CD8-positive, alpha-beta memory T cell (primary cell): ENCODE measurements at regions of chr18 and their contacts with region 1.

Region 1: GRCh38 chr18:830315-830901 is 18.4 kb upstream of the YES1 start:
- DNase-seq: peak in 3 of 5 donors; percentile 5 to 87 (median 64)
- H3K4me3 ChIP-seq: peak overlapping the region; percentile 18
- H3K4me3 Mint-ChIP-seq: peak overlapping the region; percentile 0 to 67 (median 52)
- H3K27ac ChIP-seq: peak overlapping the region; percentile 0
- H3K27ac Mint-ChIP-seq: peak overlapping the region; percentile 7 to 84 (median 56)
- H3K4me1 ChIP-seq: peaks cover 24% of the 10 kb centered on the region
- H3K4me1 Mint-ChIP-seq: peaks cover 19 to 21% (median 20%) of the 10 kb centered on the region in 3 donors
- H3K27me3 ChIP-seq: no peaks in the 10 kb centered on the region
- H3K27me3 Mint-ChIP-seq: no peaks in the 10 kb centered on the region

Region 2: DNA sequence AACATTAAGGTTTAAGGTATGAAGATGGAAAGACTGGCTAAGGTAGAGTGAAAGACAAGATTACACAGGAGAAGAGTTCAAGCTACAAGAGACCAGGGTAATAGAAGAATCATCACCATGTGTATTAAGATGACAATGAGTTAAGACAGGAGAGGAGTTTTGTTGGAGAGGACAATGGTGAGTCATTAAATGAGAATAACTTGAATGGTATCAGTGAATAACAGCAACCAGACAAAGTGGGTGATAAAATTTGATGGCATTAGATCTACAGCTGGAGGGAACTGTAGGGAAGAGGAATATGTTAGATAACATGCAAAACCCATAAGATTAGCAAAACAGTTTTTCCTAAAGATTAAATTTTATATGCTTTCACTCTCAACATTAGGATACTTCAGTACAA is 99.2 kb before region 1 on chr18:
- CTCF ChIA-PET with region 1: interaction called, 14 read pairs
- POLR2A ChIA-PET with region 1: no interaction called
- DNase-seq: no peak
- H3K4me3 ChIP-seq: no peak overlapping the region
- H3K4me3 Mint-ChIP-seq: no peak overlapping the region
- H3K27ac ChIP-seq: no peak overlapping the region
- H3K27ac Mint-ChIP-seq: peak overlapping the region in 2 of 8 donors; percentile 5 to 55
- H3K4me1 ChIP-seq: no peaks in the 10 kb centered on the region
- H3K4me1 Mint-ChIP-seq: no peaks in the 10 kb centered on the region
- H3K27me3 ChIP-seq: no peaks in the 10 kb centered on the region
- H3K27me3 Mint-ChIP-seq: no peaks in the 10 kb centered on the region

Region 3: GRCh38 chr18:765764-766549 is 64.5 kb before region 1 on chr18:
- CTCF ChIA-PET with region 1: interaction called, 11 read pairs
- POLR2A ChIA-PET with region 1: no interaction called
- DNase-seq: no peak
- H3K4me3 ChIP-seq: no peak overlapping the region
- H3K4me3 Mint-ChIP-seq: no peak overlapping the region
- H3K27ac ChIP-seq: no peak overlapping the region
- H3K27ac Mint-ChIP-seq: no peak overlapping the region
- H3K4me1 ChIP-seq: no peaks in the 10 kb centered on the region
- H3K4me1 Mint-ChIP-seq: peaks cover 22 to 30% (median 24%) of the 10 kb centered on the region in 3 donors
- H3K27me3 ChIP-seq: no peaks in the 10 kb centered on the region
- H3K27me3 Mint-ChIP-seq: peaks cover 0 to 1% of the 10 kb centered on the region in 2 donors

Region 4: GRCh38 chr18:805008-805754 is 25.2 kb before region 1 on chr18:
- CTCF ChIA-PET with region 1: interaction called, 16 read pairs
- POLR2A ChIA-PET with region 1: no interaction called
- DNase-seq: no peak
- H3K4me3 ChIP-seq: no peak overlapping the region
- H3K4me3 Mint-ChIP-seq: peak overlapping the region; percentile 42 to 78 (median 71)
- H3K27ac ChIP-seq: peak overlapping the region; percentile 44
- H3K27ac Mint-ChIP-seq: peak overlapping the region in 7 of 8 donors; percentile 22 to 82 (median 79)
- H3K4me1 ChIP-seq: peaks cover 44% of the 10 kb centered on the region
- H3K4me1 Mint-ChIP-seq: peaks cover 55 to 77% (median 69%) of the 10 kb centered on the region in 3 donors
- H3K27me3 ChIP-seq: no peaks in the 10 kb centered on the region
- H3K27me3 Mint-ChIP-seq: peaks cover 0 to 2% of the 10 kb centered on the region in 2 donors